ENCODE measurements at regions of chr6 and their contacts with region 1.

Region 1: GRCh38 chr6:29834564-29835436 is 7.2 kb downstream of the HLA-G start:
- DNase-seq: no peak
- ATAC-seq: 0 out of 2 replicates have a peak, but pooled peaks have one; percentile 53
- H3K4me3 ChIP-seq: no peak overlapping the region
- H3K27ac ChIP-seq: no peak overlapping the region
- H3K4me1 ChIP-seq: no peaks in the 10 kb centered on the region
- H3K27me3 ChIP-seq: peaks cover 20% of the 10 kb centered on the region
- CTCF ChIP-seq: peak; percentile 65
- POLR2A ChIP-seq: no peak
- RAD21 ChIP-seq: peak; percentile 72

Region 2: GRCh38 chr6:29649701-29650673 is 184.8 kb before region 1 on chr6:
- CTCF ChIA-PET with region 1: interaction called, 4 read pairs
- POLR2A ChIA-PET with region 1: no interaction called
- dilution Hi-C with region 1: no loop called
- in situ Hi-C with region 1: no loop called
- intact Hi-C with region 1: loop called (anchors 1 kb)
- DNase-seq: peak; percentile 94
- ATAC-seq: peak; percentile 97
- H3K4me3 ChIP-seq: peak overlapping the region; percentile 50
- H3K27ac ChIP-seq: peak overlapping the region; percentile 19; the same call in 1 of the 2 replicates
- H3K4me1 ChIP-seq: no peaks in the 10 kb centered on the region
- H3K27me3 ChIP-seq: peaks cover 1% of the 10 kb centered on the region
- CTCF ChIP-seq: peak; percentile 98
- POLR2A ChIP-seq: 0 out of 2 replicates have a peak, but pooled peaks have one; percentile 29
- RAD21 ChIP-seq: peak; percentile 21; the same call in 1 of the 2 replicates

Region 3: DNA sequence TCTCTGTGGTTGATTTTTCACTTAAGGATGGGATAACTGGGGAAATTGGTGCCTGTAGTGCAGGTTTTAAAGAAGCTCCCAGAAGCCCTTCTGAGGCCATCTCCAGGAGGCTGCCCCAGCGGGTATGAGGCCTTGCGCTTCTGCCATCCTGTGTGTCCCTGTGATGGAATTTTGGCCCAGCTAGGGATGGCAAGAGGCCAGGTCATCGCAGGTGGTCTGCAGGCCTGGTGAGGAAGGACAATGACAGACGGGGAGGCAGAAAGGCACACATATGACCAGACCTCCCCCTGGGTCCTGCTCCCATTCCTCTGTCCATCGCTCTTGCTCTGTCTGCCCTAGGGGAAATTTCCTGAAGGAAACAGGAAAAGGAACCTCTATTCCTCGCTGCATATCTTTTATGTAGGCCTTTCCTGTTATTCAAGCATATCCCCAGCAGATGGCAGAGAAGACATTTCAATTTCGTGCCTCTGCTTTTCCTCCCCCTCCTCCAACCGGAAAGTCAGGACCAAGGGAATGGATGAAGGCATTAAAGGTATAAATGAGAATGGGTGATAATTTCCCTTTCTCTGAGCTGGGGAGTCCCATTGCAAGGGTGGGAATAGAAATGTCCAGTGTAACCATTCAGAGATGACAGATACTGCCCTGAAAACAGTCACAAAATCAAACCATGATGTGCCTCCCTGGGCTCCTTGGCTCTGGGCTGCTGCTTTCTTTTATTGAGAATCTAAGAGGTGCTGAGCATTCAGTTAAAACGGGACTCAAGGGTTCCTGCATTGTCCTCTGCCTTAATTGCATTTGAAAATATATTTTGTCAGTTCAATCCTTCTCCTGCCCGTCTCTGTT is 129.2 kb before region 1 on chr6:
- CTCF ChIA-PET with region 1: no interaction called
- POLR2A ChIA-PET with region 1: no interaction called
- dilution Hi-C with region 1: no loop called
- in situ Hi-C with region 1: no loop called
- intact Hi-C with region 1: loop called (anchors 1 kb)
- DNase-seq: peak; percentile 53
- ATAC-seq: peak; percentile 97
- H3K4me3 ChIP-seq: no peak overlapping the region
- H3K27ac ChIP-seq: no peak overlapping the region
- H3K4me1 ChIP-seq: no peaks in the 10 kb centered on the region
- H3K27me3 ChIP-seq: peaks cover 13% of the 10 kb centered on the region
- CTCF ChIP-seq: peak; percentile 70
- POLR2A ChIP-seq: no peak
- RAD21 ChIP-seq: peak; percentile 74

Region 4: GRCh38 chr6:29737707-29738630 is 96.8 kb before region 1 on chr6:
- CTCF ChIA-PET with region 1: interaction called, 3 read pairs
- POLR2A ChIA-PET with region 1: no interaction called
- dilution Hi-C with region 1: no loop called
- in situ Hi-C with region 1: loop called (anchors 10 kb)
- intact Hi-C with region 1: loop called (anchors 1 kb)
- DNase-seq: peak; percentile 66
- ATAC-seq: peak; percentile 76
- H3K4me3 ChIP-seq: no peak overlapping the region
- H3K27ac ChIP-seq: no peak overlapping the region
- H3K4me1 ChIP-seq: peaks cover 5% of the 10 kb centered on the region; the same call in 1 of the 2 replicates
- H3K27me3 ChIP-seq: no peaks in the 10 kb centered on the region; the same call in 1 of the 2 replicates
- CTCF ChIP-seq: peak; percentile 71
- POLR2A ChIP-seq: no peak
- RAD21 ChIP-seq: peak; percentile 77

Region 5: GRCh38 chr6:29748391-29749307 is 86.2 kb before region 1 on chr6:
- CTCF ChIA-PET with region 1: no interaction called
- POLR2A ChIA-PET with region 1: no interaction called
- dilution Hi-C with region 1: no loop called
- in situ Hi-C with region 1: no loop called
- intact Hi-C with region 1: no loop called
- DNase-seq: peak; percentile 59
- ATAC-seq: peak; percentile 76
- H3K4me3 ChIP-seq: peak overlapping the region; percentile 66
- H3K27ac ChIP-seq: no peak overlapping the region; the same call in 1 of the 2 replicates
- H3K4me1 ChIP-seq: peaks cover 2% of the 10 kb centered on the region; the same call in 1 of the 2 replicates
- H3K27me3 ChIP-seq: no peaks in the 10 kb centered on the region; the same call in 1 of the 2 replicates
- CTCF ChIP-seq: no peak
- POLR2A ChIP-seq: no peak
- RAD21 ChIP-seq: no peak

Measured in IMR-90 (cell line).